ENCODE measurements at regions of chr2 and their contacts with region 1.

Region 1: GRCh38 chr2:216039916-216040315 is 26.6 kb upstream of the MREG start:
- DNase-seq: no peak
- ATAC-seq: no peak

Region 2: DNA sequence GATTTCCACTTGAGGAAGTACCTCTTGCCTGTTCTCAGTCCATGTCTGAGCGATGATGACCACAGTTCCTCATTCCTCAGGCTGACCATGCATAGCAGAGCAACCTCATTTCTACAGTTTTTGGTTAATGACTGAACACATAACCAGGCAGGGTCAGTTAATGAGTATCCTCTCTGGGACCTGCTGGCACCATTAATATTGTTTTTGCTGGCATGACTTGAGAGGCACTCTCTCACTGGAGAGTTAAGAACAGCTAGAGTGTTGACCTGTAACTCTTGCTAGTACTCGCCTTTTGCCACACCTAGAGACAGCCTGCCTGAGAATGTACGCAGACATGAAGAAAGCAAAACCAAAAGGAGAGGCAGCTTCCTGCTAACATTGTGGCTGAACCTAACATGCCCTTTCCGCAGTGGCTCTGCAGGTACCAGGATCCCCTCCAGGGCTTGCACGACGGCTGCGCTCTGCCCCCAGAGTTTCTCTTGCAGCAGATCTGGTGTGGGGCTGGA is 17.8 kb after region 1 on chr2:
- intact Hi-C with region 1: loop called (anchors 2 kb)
- DNase-seq: no peak
- ATAC-seq: no peak

Region 3: DNA sequence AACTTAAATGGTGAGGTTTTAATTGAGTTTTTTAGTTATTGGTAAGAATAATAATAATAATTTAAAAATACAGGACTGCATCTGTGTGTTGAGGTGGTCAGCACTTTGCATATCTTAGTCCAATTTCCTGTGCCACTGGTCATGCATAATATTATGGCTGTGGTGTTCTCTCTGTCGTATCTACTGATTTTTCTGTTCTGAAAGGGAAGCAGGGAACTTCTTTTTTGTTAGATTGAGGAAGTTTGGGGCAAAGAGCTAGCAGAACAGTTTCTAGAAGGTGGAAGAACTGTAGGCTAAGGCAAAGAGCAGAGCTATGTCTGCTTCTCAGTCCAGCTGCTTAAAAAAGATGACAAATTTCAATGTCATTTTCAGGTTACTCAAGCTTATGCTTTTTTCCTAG is 143.5 kb after region 1 on chr2:
- intact Hi-C with region 1: no loop called
- DNase-seq: no peak
- ATAC-seq: peak; percentile 57

Region 4: GRCh38 chr2:216195565-216196029 is 155.7 kb after region 1 on chr2:
- intact Hi-C with region 1: no loop called
- DNase-seq: no peak
- ATAC-seq: no peak